ENCODE measurements at regions of chr5 and their contacts with region 1.

Region 1: GRCh38 chr5:147369742-147370374 is 135.0 kb downstream of the STK32A start:
- DNase-seq: peak; percentile 21
- ATAC-seq: peak; percentile 60; the same call in 1 of the 2 replicates
- H3K4me3 ChIP-seq: no peak overlapping the region
- H3K27ac ChIP-seq: no peak overlapping the region
- H3K4me1 ChIP-seq: no peaks in the 10 kb centered on the region
- H3K27me3 ChIP-seq: no peaks in the 10 kb centered on the region
- CTCF ChIP-seq: peak; percentile 44 to 74 (median 70); a peak in 5 of 6 replicates
- POLR2A ChIP-seq: no peak
- RAD21 ChIP-seq: peak; percentile 86

Region 2: DNA sequence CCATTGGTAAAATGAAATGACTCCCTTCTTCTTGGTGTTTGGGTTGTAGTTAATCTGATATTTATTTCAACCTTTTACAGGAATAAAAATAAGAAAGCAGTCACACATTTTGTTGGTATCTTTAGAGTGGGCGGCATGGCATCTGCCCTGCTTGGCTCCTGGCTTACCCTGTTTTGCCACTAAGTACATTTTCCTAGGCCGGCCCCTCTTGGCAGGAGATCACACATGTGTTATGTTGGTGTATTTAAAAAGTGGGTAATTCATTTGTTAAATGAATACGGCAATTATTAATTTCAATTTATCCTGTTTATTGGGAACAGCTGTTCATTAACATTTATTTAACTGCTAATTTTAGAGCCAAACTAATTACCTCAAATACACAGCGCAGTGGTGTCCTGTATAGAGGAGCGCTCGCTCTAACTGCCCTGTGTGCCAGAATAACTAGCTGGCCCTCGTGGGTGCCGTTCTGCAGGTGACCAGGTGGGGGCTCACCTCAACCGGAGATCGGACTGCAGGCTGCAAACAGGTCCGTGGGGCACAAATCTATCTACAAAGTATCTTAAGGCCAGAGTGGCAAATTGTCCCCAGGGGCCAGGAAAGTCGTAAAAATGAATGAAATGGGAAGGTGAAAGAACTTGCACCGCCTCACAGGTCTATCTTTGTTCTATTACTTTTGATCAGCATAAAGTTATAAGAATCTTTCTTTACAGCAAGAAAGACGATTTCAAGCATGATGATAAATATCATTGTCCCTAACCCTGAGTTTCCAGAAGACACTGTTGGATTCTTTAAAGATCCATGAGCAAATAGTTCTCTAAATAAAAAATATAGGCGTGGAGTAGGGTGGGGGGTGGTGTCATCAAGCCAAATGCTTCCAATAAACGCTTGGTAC is 827.7 kb before region 1 on chr5:
- CTCF ChIA-PET with region 1: interaction called, 6 read pairs
- POLR2A ChIA-PET with region 1: no interaction called
- RAD21 ChIA-PET with region 1: no interaction called
- intact Hi-C with region 1: loop called (anchors 5 kb)
- DNase-seq: peak; percentile 49
- ATAC-seq: peak; percentile 99
- H3K4me3 ChIP-seq: no peak overlapping the region
- H3K27ac ChIP-seq: no peak overlapping the region
- H3K4me1 ChIP-seq: no peaks in the 10 kb centered on the region
- H3K27me3 ChIP-seq: no peaks in the 10 kb centered on the region
- CTCF ChIP-seq: peak; percentile 89 to 97 (median 90)
- POLR2A ChIP-seq: no peak
- RAD21 ChIP-seq: peak; percentile 96

Region 3: DNA sequence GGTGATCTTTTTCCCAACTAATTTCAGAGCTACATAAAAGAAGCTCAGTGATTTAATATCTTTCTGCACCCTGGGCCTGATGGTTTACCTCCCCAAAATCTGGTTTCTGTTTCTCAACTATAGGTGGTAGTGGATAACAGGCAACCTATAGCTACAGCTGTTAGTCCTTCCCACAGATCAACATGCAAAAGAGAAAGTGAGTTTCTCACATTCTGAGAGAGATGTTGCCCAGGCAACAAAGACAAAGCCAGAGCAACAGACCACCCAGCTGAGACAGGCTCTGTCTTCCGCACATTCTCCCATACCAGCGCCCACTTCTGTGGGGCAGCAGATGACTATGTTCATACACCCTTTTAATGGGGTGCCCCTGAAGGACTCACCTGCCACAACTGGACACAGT is 450.6 kb before region 1 on chr5:
- CTCF ChIA-PET with region 1: no interaction called
- POLR2A ChIA-PET with region 1: no interaction called
- RAD21 ChIA-PET with region 1: no interaction called
- intact Hi-C with region 1: no loop called
- DNase-seq: no peak
- ATAC-seq: no peak
- H3K4me3 ChIP-seq: no peak overlapping the region
- H3K27ac ChIP-seq: no peak overlapping the region
- H3K4me1 ChIP-seq: no peaks in the 10 kb centered on the region
- H3K27me3 ChIP-seq: peaks cover 10% of the 10 kb centered on the region; the same call in 1 of the 2 replicates
- CTCF ChIP-seq: no peak
- POLR2A ChIP-seq: no peak
- RAD21 ChIP-seq: no peak

Region 4: GRCh38 chr5:147098233-147098790 is 271.5 kb before region 1 on chr5:
- CTCF ChIA-PET with region 1: interaction called, 35 read pairs
- POLR2A ChIA-PET with region 1: no interaction called
- RAD21 ChIA-PET with region 1: interaction called in 1 of 2 experiments, 3 read pairs
- intact Hi-C with region 1: loop called (anchors 1 kb)
- DNase-seq: peak; percentile 42
- ATAC-seq: peak; percentile 84
- H3K4me3 ChIP-seq: no peak overlapping the region
- H3K27ac ChIP-seq: no peak overlapping the region
- H3K4me1 ChIP-seq: peaks cover 3 to 7% of the 10 kb centered on the region in 2 experiments; a peak in 3 of 4 replicates
- H3K27me3 ChIP-seq: no peaks in the 10 kb centered on the region
- CTCF ChIP-seq: peak; percentile 44 to 72 (median 68); a peak in 5 of 6 replicates
- POLR2A ChIP-seq: no peak
- RAD21 ChIP-seq: peak; percentile 42

Region 5: DNA sequence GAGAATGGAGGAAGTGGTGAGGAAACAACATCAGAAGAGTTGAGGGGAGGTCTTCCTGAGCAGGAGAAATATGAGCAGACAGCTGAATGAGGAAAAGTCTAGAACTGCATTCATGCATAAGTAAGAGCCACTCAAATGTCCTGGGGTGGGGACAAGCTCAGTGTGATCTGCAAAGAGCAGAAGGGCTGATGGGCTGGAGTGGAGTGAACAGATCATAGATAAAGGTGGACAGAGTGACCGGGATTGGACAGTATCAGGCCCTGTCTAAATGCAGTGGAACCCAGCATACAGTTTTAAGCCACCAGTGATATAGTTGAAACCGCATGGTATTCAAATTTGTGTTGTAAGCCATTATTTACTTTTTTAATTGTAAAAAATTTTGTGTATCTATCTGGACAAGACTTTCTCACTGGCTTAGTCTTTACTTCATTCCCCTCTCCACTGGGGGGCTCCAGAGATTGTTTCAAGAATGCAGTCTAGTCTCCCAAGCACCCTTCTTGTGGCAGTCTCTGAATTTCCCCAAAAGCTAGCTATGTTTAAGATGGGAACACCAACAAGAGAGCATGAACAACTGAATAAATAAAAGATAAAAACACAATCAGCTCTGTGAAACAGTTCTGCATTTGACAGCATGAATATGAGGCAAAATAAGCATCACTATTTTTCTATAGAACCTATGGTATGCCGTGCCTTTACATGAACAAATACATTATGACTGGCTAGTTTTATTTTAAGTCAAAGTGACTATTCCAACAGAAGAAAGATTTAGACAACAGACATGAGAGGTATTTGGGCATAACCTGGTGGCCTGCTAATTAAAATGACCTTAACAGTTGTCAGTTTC is 145.7 kb before region 1 on chr5:
- CTCF ChIA-PET with region 1: interaction called, 102 read pairs
- POLR2A ChIA-PET with region 1: interaction called, 7 read pairs
- RAD21 ChIA-PET with region 1: interaction called, 6 to 19 read pairs
- intact Hi-C with region 1: loop called (anchors 1 kb)
- DNase-seq: peak; percentile 36
- ATAC-seq: peak; percentile 92
- H3K4me3 ChIP-seq: no peak overlapping the region
- H3K27ac ChIP-seq: no peak overlapping the region
- H3K4me1 ChIP-seq: no peaks in the 10 kb centered on the region
- H3K27me3 ChIP-seq: peaks cover 24% of the 10 kb centered on the region; the same call in 1 of the 2 replicates
- CTCF ChIP-seq: peak; percentile 61 to 83 (median 61)
- POLR2A ChIP-seq: no peak
- RAD21 ChIP-seq: peak; percentile 85

Region 6: GRCh38 chr5:147310059-147310704 is 59.7 kb before region 1 on chr5:
- CTCF ChIA-PET with region 1: no interaction called
- POLR2A ChIA-PET with region 1: no interaction called
- RAD21 ChIA-PET with region 1: no interaction called
- intact Hi-C with region 1: no loop called
- DNase-seq: peak; percentile 76
- ATAC-seq: peak; percentile 98
- H3K4me3 ChIP-seq: peak overlapping the region in 1 of 2 experiments; percentile 18; a peak in 2 of 4 replicates
- H3K27ac ChIP-seq: peak overlapping the region; percentile 50
- H3K4me1 ChIP-seq: peaks cover 8 to 22% of the 10 kb centered on the region in 2 experiments; a peak in 3 of 4 replicates
- H3K27me3 ChIP-seq: no peaks in the 10 kb centered on the region
- CTCF ChIP-seq: no peak
- POLR2A ChIP-seq: no peak
- RAD21 ChIP-seq: no peak